ENCODE measurements at regions of chr10 and their contacts with region 1.

Region 1: DNA sequence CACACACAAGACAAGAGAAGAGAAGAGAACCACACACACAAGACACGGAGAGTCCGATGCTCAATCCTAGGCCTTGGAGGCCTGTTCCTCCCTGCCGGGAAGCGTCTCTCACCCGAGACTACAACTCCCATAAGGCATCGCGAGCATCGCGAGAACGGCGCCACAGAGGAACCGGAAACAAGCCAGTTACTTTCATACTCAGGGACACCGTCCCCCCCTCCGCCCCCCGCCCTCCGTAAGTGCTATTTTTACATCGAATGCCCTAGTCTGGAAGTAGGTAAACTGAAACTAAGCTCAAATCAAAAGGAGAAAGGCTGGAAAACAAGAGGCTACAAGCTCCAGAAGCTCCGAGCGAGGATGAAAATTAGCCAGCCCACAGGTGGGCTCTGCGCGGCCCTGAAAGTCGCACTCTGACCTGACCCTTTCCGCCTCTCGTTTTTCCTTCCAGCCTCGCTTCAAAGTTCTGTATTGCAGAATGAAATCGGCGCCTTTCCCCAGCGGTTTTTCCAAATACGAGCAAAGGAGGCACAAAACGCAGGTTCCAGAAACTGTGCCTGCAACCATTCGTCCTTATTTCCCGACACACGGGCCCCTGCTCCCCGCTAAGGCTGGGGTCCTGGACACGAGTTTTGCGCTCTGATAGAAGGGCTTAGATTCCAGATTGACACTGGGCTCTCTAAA is 11.5 kb upstream of the DNAJC12 start:
- DNase-seq: peak; percentile 89
- ATAC-seq: peak; percentile 99
- H3K4me3 ChIP-seq: peak overlapping the region; percentile 73 to 84 (median 79)
- H3K27ac ChIP-seq: peak overlapping the region; percentile 91
- H3K4me1 ChIP-seq: peaks cover 22% of the 10 kb centered on the region
- H3K27me3 ChIP-seq: no peaks in the 10 kb centered on the region
- CTCF ChIP-seq: no peak
- EP300 ChIP-seq: peak in 1 of 2 experiments; percentile 37; a peak in 1 of 4 replicates
- POLR2A ChIP-seq: peak; percentile 35 to 71
- RAD21 ChIP-seq: no peak

Region 2: DNA sequence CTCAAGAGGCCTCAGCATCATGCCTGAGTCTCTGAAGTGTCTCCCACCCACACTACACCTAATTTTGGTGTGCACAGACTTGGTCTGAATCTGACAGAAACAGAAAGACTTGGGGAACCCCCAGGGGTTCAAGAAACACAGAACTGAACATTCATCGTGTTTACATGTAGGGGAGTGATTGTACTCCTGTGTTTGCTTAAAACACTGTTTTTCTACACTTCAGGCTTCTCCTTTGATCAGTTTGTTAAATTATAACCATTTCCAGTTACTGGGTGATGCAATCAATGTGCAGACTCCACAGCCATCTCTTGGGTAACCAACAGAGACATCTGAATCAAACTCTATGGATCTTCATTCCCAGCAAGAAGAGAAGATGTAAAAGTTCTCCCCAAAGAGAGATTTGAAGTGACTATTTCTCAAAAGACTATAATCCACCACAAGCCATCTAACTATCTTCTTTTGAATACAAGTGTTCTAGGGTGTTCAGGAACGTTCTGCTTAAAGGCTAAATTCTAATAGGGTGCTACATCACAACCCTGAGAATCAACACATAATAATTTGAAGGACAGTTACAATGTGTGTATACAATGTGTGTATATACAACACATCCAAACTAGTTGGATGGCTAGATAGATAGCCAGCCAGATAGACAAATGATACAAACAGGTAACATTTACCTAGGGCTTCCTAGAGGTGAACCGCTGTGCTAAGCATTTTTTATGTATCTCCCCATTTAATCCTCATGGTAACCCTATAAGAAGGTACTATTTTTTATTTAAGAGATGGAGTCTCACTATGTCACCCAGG is 45.7 kb before region 1 on chr10:
- CTCF ChIA-PET with region 1: no interaction called
- POLR2A ChIA-PET with region 1: interaction called, 10 read pairs
- in situ Hi-C with region 1: no loop called
- intact Hi-C with region 1: no loop called
- DNase-seq: peak; percentile 94
- ATAC-seq: peak; percentile 93
- H3K4me3 ChIP-seq: peak overlapping the region; percentile 4 to 46 (median 31); a peak in 2 of 6 replicates
- H3K27ac ChIP-seq: peak overlapping the region; percentile 90
- H3K4me1 ChIP-seq: peaks cover 75% of the 10 kb centered on the region
- H3K27me3 ChIP-seq: no peaks in the 10 kb centered on the region
- CTCF ChIP-seq: no peak
- EP300 ChIP-seq: peak; percentile 82 to 99
- POLR2A ChIP-seq: 0 out of 4 replicates have a peak, but pooled peaks of 1 of the 2 experiments have one; percentile 2
- RAD21 ChIP-seq: no peak

Region 3: DNA sequence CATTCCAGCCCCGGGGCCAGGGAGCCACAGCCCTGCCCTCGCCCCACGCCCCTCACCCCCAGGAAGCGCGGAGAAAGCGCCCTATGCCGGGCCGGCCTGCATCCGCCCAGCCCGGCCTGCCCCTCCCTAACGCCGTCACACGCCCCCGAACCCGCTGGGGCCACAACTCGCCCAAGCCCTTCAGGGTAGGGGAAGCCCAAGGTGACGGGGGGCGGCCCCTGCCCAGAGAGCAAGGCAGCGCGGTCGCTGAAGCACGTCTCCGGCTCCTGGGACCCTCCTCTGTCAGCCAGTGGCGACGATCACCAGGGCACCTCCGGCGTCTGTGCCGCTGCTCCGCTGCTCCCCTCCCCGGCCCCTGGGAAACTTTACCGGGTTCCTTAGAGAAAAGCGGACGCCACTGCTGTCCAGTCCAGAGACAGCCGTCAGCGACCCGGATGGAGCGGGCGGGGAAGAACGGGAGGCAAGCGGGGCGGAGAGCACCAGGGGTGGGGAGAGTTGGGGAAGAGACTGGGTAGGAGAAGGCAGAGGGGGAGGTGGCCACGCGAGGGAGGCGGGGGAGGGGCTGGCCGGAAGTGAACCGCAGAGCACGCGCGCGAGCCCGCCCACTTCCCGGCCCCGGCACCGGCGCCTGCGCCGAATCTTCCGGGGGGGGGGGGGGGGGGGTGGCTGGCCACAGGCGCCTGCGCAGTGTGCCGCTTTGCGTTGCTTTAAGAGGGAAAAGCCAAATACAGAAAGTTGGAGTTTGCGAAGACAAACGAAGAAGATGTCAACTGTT is 225.5 kb after region 1 on chr10 and contains the start of gene HERC4:
- CTCF ChIA-PET with region 1: no interaction called
- POLR2A ChIA-PET with region 1: no interaction called
- in situ Hi-C with region 1: no loop called
- intact Hi-C with region 1: loop called (anchors 10 kb)
- DNase-seq: peak; percentile 83
- ATAC-seq: peak; percentile 98
- H3K4me3 ChIP-seq: peak within 1 kb of the TSS; percentile 91 to 99 (median 94)
- H3K27ac ChIP-seq: peak within 1 kb of the TSS; percentile 96
- H3K4me1 ChIP-seq: peaks cover 37% of the 10 kb centered on the region
- H3K27me3 ChIP-seq: no peaks in the 10 kb centered on the region
- CTCF ChIP-seq: 0 out of 2 replicates have a peak, but pooled peaks have one; percentile 13
- EP300 ChIP-seq: peak in 1 of 2 experiments; percentile 32; a peak in 1 of 4 replicates
- POLR2A ChIP-seq: peak; percentile 56 to 67; a peak in 3 of 4 replicates
- RAD21 ChIP-seq: no peak; the same call in 1 of the 2 replicates
- total RNA-seq, gene HERC4: 20.0 and 20.2 TPM in 2 replicates

Region 4: GRCh38 chr10:68208424-68209042 is 359.1 kb after region 1 on chr10:
- CTCF ChIA-PET with region 1: no interaction called
- POLR2A ChIA-PET with region 1: no interaction called
- in situ Hi-C with region 1: loop called (anchors 10 kb)
- intact Hi-C with region 1: no loop called
- DNase-seq: peak; percentile 72
- ATAC-seq: peak; percentile 97
- H3K4me3 ChIP-seq: peak overlapping the region in 1 of 3 experiments; percentile 11; a peak in 1 of 6 replicates
- H3K27ac ChIP-seq: no peak overlapping the region
- H3K4me1 ChIP-seq: peaks cover 7% of the 10 kb centered on the region; the same call in 1 of the 2 replicates
- H3K27me3 ChIP-seq: 0 out of 5 replicates have a peak, but pooled peaks cover 0 to 3% of the 10 kb centered on the region in 2 experiments
- CTCF ChIP-seq: peak; percentile 95
- EP300 ChIP-seq: no peak
- POLR2A ChIP-seq: no peak
- RAD21 ChIP-seq: peak; percentile 76

Measured in HepG2 (cell line).